CD4-positive, alpha-beta memory T cell (primary cell): ENCODE measurements at regions of chr7 and their contacts with region 1.

Region 1: GRCh38 chr7:96285579-96285978 is 36.3 kb downstream of the SLC25A13 start:
- DNase-seq: peak; percentile 74 to 85 (median 79)
- H3K4me3 ChIP-seq: peak overlapping the region in 1 of 2 donors; percentile 21
- H3K4me3 Mint-ChIP-seq: peak overlapping the region; percentile 18 to 90 (median 76)
- H3K27ac ChIP-seq: peak overlapping the region; percentile 54
- H3K27ac Mint-ChIP-seq: peak overlapping the region; percentile 83 to 99 (median 97)
- H3K4me1 ChIP-seq: peaks cover 40% of the 10 kb centered on the region
- H3K4me1 Mint-ChIP-seq: peaks cover 31 to 44% (median 41%) of the 10 kb centered on the region in 4 donors
- H3K27me3 ChIP-seq: no peaks in the 10 kb centered on the region
- H3K27me3 Mint-ChIP-seq: no peaks in the 10 kb centered on the region

Region 2: DNA sequence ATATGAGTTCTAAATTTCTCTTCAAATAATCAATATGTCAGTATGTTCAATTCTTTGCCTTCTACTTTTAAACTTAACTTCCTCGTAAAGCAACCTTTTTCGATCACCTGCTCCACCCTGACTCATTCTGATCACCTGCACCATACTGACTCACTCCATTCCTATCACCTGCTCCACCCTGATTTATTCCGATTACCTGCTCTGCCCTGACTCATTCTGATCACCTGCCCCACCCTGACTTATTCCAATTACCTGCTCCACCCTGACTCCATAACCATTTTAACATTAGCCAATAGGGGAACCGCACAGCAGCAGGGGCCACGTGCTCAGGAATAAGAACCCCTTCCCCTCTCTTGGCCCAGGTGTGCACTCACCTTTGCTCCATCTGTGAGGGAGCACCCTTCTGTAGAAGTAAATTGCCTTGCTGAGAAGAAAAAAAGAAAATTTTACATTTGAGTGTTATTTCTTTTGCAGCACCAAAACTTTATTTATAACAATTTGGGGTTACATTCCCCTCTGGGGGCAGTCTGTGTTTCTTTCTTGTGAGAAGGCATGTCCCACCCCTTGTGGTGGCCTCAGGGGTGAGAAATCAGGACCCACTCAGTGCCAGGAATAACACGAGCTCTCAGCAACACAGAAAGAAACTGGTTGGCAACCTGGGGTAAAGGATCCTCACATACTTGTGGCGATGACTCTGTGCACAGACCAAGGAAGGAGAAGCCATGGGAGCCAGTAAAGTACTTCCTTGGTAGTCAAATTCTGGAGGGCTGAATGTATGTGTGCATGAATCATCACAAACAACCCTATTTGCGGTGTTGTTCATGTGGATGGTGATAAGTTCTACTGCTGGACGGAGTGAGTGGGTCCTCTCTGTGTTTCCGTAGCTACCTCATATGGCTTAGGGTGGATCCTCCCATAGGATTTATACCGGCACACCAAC is 1407.6 kb before region 1 on chr7:
- CTCF ChIA-PET with region 1: no interaction called
- POLR2A ChIA-PET with region 1: no interaction called
- intact Hi-C with region 1: no loop called
- DNase-seq: no peak
- H3K4me3 ChIP-seq: no peak overlapping the region
- H3K4me3 Mint-ChIP-seq: no peak overlapping the region
- H3K27ac ChIP-seq: no peak overlapping the region
- H3K27ac Mint-ChIP-seq: no peak overlapping the region
- H3K4me1 ChIP-seq: no peaks in the 10 kb centered on the region
- H3K4me1 Mint-ChIP-seq: no peaks in the 10 kb centered on the region
- H3K27me3 ChIP-seq: no peaks in the 10 kb centered on the region
- H3K27me3 Mint-ChIP-seq: peaks cover 1% of the 10 kb centered on the region in 2 donors

Region 3: GRCh38 chr7:96303686-96304443 is 18.3 kb after region 1 on chr7:
- CTCF ChIA-PET with region 1: no interaction called
- POLR2A ChIA-PET with region 1: interaction called, 3 read pairs
- intact Hi-C with region 1: loop called (anchors 2 kb)
- DNase-seq: no peak
- H3K4me3 ChIP-seq: no peak overlapping the region
- H3K4me3 Mint-ChIP-seq: no peak overlapping the region
- H3K27ac ChIP-seq: no peak overlapping the region
- H3K27ac Mint-ChIP-seq: peak overlapping the region in 4 of 7 donors; percentile 19 to 69 (median 47)
- H3K4me1 ChIP-seq: peaks cover 30% of the 10 kb centered on the region
- H3K4me1 Mint-ChIP-seq: peaks cover 28 to 63% (median 40%) of the 10 kb centered on the region in 4 donors
- H3K27me3 ChIP-seq: no peaks in the 10 kb centered on the region
- H3K27me3 Mint-ChIP-seq: no peaks in the 10 kb centered on the region

Region 4: DNA sequence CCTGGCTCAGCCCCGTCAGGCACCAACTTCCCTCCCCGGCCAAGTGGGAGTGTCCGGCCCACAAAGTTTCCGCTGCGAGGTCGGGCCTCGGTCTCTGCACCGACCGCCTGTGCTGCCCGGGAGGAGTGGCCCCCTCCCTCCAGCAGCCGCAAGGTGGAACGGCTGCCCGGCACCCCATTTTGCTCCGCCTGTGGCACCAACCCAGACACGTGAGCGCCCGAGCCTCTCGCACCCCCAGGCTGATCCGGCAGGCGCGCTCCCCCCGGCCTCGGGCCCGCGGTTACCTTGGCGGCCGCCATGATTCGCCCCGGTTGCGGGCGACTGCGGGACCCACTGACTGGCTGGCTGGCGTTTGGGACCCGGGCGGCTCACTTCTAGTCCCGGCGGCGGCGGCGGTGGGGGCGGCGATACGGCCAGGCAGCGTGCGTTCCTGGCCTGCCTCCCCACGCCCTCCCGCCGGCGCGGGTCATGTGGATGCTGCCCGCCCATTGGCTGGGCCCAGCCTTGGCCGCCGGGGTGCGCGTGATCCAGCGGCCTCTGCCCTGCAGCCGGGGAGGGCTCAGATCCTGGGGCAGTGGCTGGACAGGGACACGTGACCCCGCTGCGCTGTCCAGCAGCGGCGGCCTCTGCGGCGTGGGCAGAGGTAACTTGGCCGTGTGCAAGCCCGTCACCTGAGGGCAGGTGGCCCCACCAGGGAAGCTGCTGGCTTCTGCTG is 36.2 kb after region 1 on chr7 and contains the start of gene SLC25A13:
- CTCF ChIA-PET with region 1: no interaction called
- POLR2A ChIA-PET with region 1: interaction called, 12 read pairs
- intact Hi-C with region 1: loop called (anchors 1 kb)
- DNase-seq: peak; percentile 65 to 71 (median 70)
- H3K4me3 ChIP-seq: peak within 1 kb of the TSS; percentile 43 to 78
- H3K4me3 Mint-ChIP-seq: peak within 1 kb of the TSS; percentile 90 to 98 (median 92)
- H3K27ac ChIP-seq: peak within 1 kb of the TSS; percentile 72
- H3K27ac Mint-ChIP-seq: peak within 1 kb of the TSS; percentile 87 to 97 (median 94)
- H3K4me1 ChIP-seq: peaks cover 18% of the 10 kb centered on the region
- H3K4me1 Mint-ChIP-seq: peaks cover 9 to 38% (median 19%) of the 10 kb centered on the region in 4 donors
- H3K27me3 ChIP-seq: no peaks in the 10 kb centered on the region
- H3K27me3 Mint-ChIP-seq: peaks cover 0 to 2% of the 10 kb centered on the region in 2 donors
- total RNA-seq, gene SLC25A13: 9.1 to 12.2 TPM

Region 5: DNA sequence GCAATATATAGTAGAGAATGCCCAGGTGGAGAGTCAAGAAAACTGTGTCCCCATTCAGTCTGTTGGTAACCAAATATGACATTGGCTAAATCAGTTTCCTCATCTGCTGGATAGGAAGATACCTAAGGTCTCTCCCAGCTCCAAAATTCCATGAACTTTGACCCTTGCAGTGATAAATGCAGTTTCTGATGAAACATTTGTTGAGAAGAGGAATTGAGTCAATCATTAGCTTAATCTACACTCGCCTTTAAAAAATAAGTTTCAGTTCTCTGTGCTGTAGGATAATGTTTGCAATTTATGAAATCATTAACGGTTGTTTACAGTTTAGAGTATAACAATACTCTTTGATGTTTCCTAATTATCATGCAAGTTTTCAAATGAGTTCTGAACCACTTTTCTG is 74.3 kb after region 1 on chr7:
- CTCF ChIA-PET with region 1: no interaction called
- POLR2A ChIA-PET with region 1: no interaction called
- intact Hi-C with region 1: no loop called
- DNase-seq: no peak
- H3K4me3 ChIP-seq: no peak overlapping the region
- H3K4me3 Mint-ChIP-seq: no peak overlapping the region
- H3K27ac ChIP-seq: no peak overlapping the region
- H3K27ac Mint-ChIP-seq: no peak overlapping the region
- H3K4me1 ChIP-seq: no peaks in the 10 kb centered on the region
- H3K4me1 Mint-ChIP-seq: no peaks in the 10 kb centered on the region
- H3K27me3 ChIP-seq: no peaks in the 10 kb centered on the region
- H3K27me3 Mint-ChIP-seq: no peaks in the 10 kb centered on the region